ENCODE measurements at regions of chr20 and their contacts with region 1.

Region 1: GRCh38 chr20:47620808-47621805 is 119.4 kb downstream of the NCOA3 start:
- DNase-seq: no peak
- H3K4me3 Mint-ChIP-seq: no peak overlapping the region
- H3K27ac Mint-ChIP-seq: peak overlapping the region; percentile 48
- H3K4me1 Mint-ChIP-seq: peaks cover 36% of the 10 kb centered on the region
- H3K27me3 Mint-ChIP-seq: no peaks in the 10 kb centered on the region

Region 2: GRCh38 chr20:47196091-47197081 is 424.7 kb before region 1 on chr20:
- intact Hi-C with region 1: loop called (anchors 5 kb)
- DNase-seq: peak; percentile 69
- H3K4me3 Mint-ChIP-seq: no peak overlapping the region
- H3K27ac Mint-ChIP-seq: no peak overlapping the region
- H3K4me1 Mint-ChIP-seq: peaks cover 18% of the 10 kb centered on the region
- H3K27me3 Mint-ChIP-seq: peaks cover 12% of the 10 kb centered on the region

Region 3: DNA sequence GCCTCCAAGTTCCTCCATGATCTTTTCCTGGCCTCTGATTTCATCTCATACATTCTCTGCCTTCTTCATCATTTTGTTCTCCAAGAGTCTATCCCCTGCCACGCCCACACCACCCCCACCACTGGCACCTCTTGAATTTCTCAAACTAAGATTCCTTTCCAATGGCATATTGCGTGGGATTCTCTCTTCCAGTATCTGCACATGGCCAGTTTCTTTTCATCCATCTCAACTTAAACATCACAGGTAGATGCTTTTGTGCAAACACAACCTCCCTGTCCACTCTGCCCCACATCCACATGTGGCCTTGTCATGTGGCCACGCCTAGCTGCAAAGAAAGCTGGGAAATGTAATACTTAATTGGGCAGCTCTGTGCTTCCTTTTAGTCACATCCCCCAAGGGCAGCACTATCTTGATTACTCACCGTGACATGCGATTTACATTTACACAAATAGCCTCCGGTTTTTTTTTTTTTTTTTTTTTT is 231.2 kb before region 1 on chr20:
- intact Hi-C with region 1: loop called (anchors 2 kb)
- DNase-seq: no peak
- H3K4me3 Mint-ChIP-seq: no peak overlapping the region
- H3K27ac Mint-ChIP-seq: no peak overlapping the region
- H3K4me1 Mint-ChIP-seq: peaks cover 16% of the 10 kb centered on the region
- H3K27me3 Mint-ChIP-seq: no peaks in the 10 kb centered on the region